ENCODE measurements at regions of chr14 and their contacts with region 1.

Region 1: DNA sequence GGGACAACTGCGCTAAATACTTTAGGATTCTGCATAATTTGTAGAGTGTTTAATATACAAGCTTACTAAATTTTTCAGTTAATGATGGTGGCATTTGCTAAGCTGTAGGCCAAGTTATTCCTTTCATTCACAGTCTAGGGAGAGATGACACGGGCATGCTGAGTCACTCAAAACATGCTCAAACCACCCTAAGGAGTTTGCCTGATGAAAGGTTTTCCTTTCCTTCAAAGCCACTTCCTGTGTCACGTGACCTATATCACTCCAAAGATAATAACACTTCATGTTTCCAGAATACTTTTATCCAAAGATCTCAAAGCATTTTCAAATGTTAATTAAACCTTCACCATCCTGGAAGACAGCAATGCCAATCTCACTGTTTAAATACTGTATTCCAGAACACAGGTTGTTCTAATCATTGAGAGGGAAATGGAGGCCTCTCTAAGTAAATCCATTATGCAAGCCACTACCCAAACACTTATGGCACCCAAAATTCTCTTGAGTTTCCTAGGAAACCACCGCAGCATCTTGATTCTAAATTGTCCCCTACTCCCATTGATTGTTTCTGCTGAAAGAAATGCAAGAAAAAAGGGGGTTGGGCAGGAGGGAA is 207.0 kb upstream of the CDKN3 start:
- DNase-seq: no peak
- H3K4me3 ChIP-seq: no peak overlapping the region
- H3K27ac ChIP-seq: no peak overlapping the region
- H3K4me1 ChIP-seq: peaks cover 10% of the 10 kb centered on the region
- H3K27me3 ChIP-seq: no peaks in the 10 kb centered on the region
- CTCF ChIP-seq: no peak
- POLR2A ChIP-seq: no peak

Region 2: GRCh38 chr14:53341324-53341723 is 848.5 kb before region 1 on chr14:
- intact Hi-C with region 1: loop called (anchors 5 kb)
- DNase-seq: no peak
- H3K4me3 ChIP-seq: no peak overlapping the region
- H3K27ac ChIP-seq: no peak overlapping the region
- H3K4me1 ChIP-seq: no peaks in the 10 kb centered on the region
- H3K27me3 ChIP-seq: no peaks in the 10 kb centered on the region
- CTCF ChIP-seq: no peak
- POLR2A ChIP-seq: no peak

Measured in vagina (tissue), 2 donors.